Activated CD4-positive, alpha-beta memory T cell treated with anti-CD3 and anti-CD28 coated beads for 36 hours (primary cell): ENCODE measurements at regions of chr21 and their contacts with region 1.

Region 1: GRCh38 chr21:33976082-33977016 is 60.7 kb upstream of the ATP5PO start:
- DNase-seq: peak; percentile 79
- H3K4me3 Mint-ChIP-seq: peak overlapping the region; percentile 67
- H3K27ac Mint-ChIP-seq: peak overlapping the region; percentile 100
- H3K4me1 Mint-ChIP-seq: peaks cover 69% of the 10 kb centered on the region
- H3K27me3 Mint-ChIP-seq: no peaks in the 10 kb centered on the region

Region 2: GRCh38 chr21:33931799-33932390 is 44.5 kb before region 1 on chr21:
- CTCF ChIA-PET with region 1: interaction called, 4 read pairs
- POLR2A ChIA-PET with region 1: interaction called, 20 read pairs
- intact Hi-C with region 1: loop called (anchors 2 kb)
- DNase-seq: no peak
- H3K4me3 Mint-ChIP-seq: peak overlapping the region; percentile 92
- H3K27ac Mint-ChIP-seq: peak overlapping the region; percentile 99
- H3K4me1 Mint-ChIP-seq: peaks cover 41% of the 10 kb centered on the region
- H3K27me3 Mint-ChIP-seq: no peaks in the 10 kb centered on the region

Region 3: DNA sequence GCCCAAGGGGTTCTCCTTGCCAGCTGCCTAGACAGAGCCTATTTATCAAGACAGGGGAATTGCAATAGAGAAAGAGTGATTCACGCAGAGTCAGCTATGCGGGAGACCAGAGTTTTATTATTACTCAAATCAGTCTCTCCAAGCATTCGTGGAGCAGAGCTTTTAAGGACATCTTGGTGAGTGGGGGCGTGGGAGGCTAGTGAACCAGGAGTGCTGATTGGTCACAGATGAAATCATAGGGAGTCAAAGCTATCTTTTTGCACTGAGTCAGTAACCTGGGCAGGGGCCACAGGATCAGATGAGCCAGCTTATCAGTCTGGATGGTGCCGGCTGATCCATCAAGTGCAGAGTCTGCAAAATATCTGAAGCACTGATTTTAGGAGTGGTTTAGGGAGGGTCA is 32.3 kb after region 1 on chr21:
- CTCF ChIA-PET with region 1: no interaction called
- POLR2A ChIA-PET with region 1: interaction called, 16 read pairs
- intact Hi-C with region 1: loop called (anchors 1 kb)
- DNase-seq: peak; percentile 90
- H3K4me3 Mint-ChIP-seq: no peak overlapping the region
- H3K27ac Mint-ChIP-seq: peak overlapping the region; percentile 42
- H3K4me1 Mint-ChIP-seq: peaks cover 19% of the 10 kb centered on the region
- H3K27me3 Mint-ChIP-seq: no peaks in the 10 kb centered on the region

Region 4: DNA sequence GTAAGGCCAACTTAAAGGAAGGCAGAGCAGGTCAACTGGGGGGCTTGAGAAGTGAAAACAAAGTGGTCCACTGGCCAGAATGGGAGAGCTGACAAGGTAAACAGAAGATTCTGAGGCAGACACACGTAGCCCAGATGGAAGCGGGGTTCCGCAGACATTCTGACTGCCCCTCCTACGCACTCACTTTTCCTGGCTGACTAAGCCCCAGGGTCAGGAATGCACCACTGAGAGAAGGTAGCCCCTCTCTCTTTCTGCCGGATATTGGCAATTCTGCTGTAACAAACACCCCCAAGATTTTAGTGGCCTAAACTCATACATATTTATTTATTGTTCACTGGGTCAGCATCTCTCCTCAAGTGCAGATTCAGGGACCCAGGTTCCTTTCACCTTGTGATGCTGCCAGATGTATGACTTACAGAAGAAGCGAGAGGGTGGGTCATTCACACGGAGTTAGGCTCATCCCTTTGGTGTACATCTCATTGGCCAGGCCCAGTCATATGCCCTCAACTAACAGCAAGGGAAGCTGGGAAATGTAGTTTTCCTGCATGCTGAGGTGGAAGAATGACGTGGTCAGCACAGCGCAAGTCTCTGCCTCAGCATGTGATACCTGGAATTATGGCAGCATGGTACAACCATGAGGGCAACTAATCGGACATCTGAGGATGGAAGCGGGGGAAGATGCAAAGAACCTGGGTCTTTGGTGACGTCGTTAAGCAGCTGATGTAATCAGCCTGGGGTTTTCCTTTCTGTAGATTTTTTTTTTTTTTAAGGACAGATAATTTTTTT is 53.6 kb after region 1 on chr21:
- CTCF ChIA-PET with region 1: no interaction called
- POLR2A ChIA-PET with region 1: interaction called, 8 read pairs
- intact Hi-C with region 1: loop called (anchors 2 kb)
- DNase-seq: peak; percentile 75
- H3K4me3 Mint-ChIP-seq: peak overlapping the region; percentile 51
- H3K27ac Mint-ChIP-seq: peak overlapping the region; percentile 30
- H3K4me1 Mint-ChIP-seq: peaks cover 28% of the 10 kb centered on the region
- H3K27me3 Mint-ChIP-seq: no peaks in the 10 kb centered on the region

Region 5: GRCh38 chr21:34046917-34047316 is 70.6 kb after region 1 on chr21:
- CTCF ChIA-PET with region 1: no interaction called
- POLR2A ChIA-PET with region 1: no interaction called
- intact Hi-C with region 1: no loop called
- DNase-seq: no peak
- H3K4me3 Mint-ChIP-seq: no peak overlapping the region
- H3K27ac Mint-ChIP-seq: no peak overlapping the region
- H3K4me1 Mint-ChIP-seq: peaks cover 9% of the 10 kb centered on the region
- H3K27me3 Mint-ChIP-seq: peaks cover 2% of the 10 kb centered on the region

Region 6: DNA sequence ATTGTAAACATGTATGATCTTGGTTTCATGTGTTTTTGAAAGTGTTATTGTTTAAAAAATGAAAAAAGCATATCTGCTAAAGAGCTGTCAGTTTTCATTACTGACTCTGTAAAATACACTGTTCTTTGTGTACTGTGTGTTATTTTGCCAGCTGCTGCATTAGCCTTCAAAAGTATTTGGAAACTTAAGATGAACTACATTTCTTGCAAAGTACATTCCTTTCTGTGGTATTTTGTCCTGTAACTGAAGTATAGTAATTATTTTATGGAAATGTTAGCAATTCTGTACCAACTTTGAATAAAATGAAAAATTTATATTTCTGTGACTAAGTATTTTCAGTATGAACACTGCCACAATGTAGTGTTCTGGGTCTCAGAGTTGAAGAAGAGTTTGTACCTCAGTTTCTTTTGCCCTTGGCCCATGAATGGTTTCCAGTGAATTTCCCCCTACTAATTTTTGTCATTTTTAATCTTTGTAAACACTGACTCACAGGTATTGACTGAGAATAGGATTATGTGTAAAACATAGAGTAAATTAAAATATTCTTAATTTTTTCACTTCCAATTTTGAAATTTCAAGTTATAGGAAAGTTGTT is 129.7 kb after region 1 on chr21:
- CTCF ChIA-PET with region 1: interaction called, 4 read pairs
- POLR2A ChIA-PET with region 1: no interaction called
- intact Hi-C with region 1: loop called (anchors 1 kb)
- DNase-seq: no peak
- H3K4me3 Mint-ChIP-seq: no peak overlapping the region
- H3K27ac Mint-ChIP-seq: peak overlapping the region; percentile 74
- H3K4me1 Mint-ChIP-seq: peaks cover 85% of the 10 kb centered on the region
- H3K27me3 Mint-ChIP-seq: no peaks in the 10 kb centered on the region

Region 7: DNA sequence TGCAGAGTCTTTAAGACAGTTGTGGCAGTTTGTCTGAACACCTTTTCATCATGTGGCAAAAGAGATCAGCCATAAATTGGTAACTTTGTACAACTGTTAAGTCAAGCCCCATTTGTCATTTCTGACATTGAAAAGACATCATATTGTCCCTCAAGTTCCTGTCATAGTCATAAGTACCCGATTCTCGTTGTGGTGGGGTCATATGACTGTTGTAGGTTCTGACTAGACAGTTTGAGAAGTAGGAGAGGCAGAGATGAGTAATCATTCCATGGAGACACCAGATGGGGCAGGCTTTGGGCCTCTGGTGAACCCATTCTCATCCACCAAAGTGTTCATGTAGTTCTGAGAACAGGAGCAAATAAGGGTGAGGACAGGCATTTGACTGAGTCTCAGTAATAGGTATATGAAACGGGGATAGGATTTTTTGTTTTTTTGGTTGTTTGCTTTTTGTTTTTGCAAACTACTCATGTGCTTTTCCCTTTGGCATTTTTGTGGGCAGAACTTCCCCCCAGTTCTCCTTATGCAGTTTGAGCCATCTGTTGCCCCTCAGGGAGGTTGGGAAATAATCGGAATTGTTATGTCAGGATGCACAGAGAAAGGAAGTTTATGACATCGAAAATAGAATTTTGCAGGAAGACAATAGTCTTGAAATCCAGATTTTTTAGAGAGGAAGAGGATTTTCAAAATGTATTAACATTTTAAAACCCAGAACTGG is 300.5 kb after region 1 on chr21:
- CTCF ChIA-PET with region 1: no interaction called
- POLR2A ChIA-PET with region 1: no interaction called
- intact Hi-C with region 1: loop called (anchors 1 kb)
- DNase-seq: peak; percentile 73
- H3K4me3 Mint-ChIP-seq: no peak overlapping the region
- H3K27ac Mint-ChIP-seq: peak overlapping the region; percentile 63
- H3K4me1 Mint-ChIP-seq: peaks cover 9% of the 10 kb centered on the region
- H3K27me3 Mint-ChIP-seq: peaks cover 14% of the 10 kb centered on the region